Dendritic cell treated with granulocyte-macrophage colony-stimulating factor and Interleukin-4, amounts not matched to agents 40 ng/mL and 50 ng/mL, for 4 days (primary cell): ENCODE measurements at regions of chr16 and their contacts with region 1.

Region 1: DNA sequence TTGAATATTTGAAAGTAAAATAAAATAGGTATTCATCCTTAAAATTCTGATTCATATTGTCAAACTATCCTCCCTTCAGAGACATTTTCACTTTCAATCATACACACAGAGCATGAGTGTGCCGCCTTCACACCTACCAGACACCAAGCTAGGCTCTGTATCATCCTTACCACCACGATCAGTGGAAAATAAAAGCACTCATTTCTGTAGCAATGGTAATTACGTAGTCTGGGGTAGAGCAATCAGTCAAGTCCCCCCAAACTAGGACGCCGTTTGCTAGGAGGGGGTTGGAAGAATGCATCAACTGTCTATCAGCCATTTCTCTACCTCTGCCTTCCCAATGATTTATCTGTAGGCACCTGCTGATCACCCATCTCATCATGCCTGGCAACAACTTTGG is 84.6 kb upstream of the GRIN2A start:
- H3K4me3 Mint-ChIP-seq: no peak overlapping the region
- H3K27ac Mint-ChIP-seq: no peak overlapping the region
- H3K4me1 Mint-ChIP-seq: no peaks in the 10 kb centered on the region
- H3K27me3 Mint-ChIP-seq: no peaks in the 10 kb centered on the region

Region 2: GRCh38 chr16:10708969-10709368 is 442.2 kb after region 1 on chr16:
- intact Hi-C with region 1: loop called (anchors 10 kb)
- H3K4me3 Mint-ChIP-seq: no peak overlapping the region
- H3K27ac Mint-ChIP-seq: no peak overlapping the region
- H3K4me1 Mint-ChIP-seq: no peaks in the 10 kb centered on the region
- H3K27me3 Mint-ChIP-seq: peaks cover 4% of the 10 kb centered on the region